MCF 10A (cell line): ENCODE measurements at regions of chr7 and their contacts with region 1.

Region 1: GRCh38 chr7:148856891-148857290 is 27.2 kb downstream of the EZH2 start:
- DNase-seq: no peak
- H3K4me3 Mint-ChIP-seq: no peak overlapping the region
- H3K27ac Mint-ChIP-seq: no peak overlapping the region
- H3K4me1 Mint-ChIP-seq: peaks cover 13% of the 10 kb centered on the region
- H3K27me3 Mint-ChIP-seq: no peaks in the 10 kb centered on the region
- CTCF ChIP-seq: no peak

Region 2: GRCh38 chr7:148871030-148871429 is 14.1 kb after region 1 on chr7:
- CTCF ChIA-PET with region 1: interaction called, 9 read pairs
- POLR2A ChIA-PET with region 1: interaction called, 13 read pairs
- intact Hi-C with region 1: loop called (anchors 2 kb)
- DNase-seq: no peak
- H3K4me3 Mint-ChIP-seq: no peak overlapping the region
- H3K27ac Mint-ChIP-seq: no peak overlapping the region
- H3K4me1 Mint-ChIP-seq: no peaks in the 10 kb centered on the region
- H3K27me3 Mint-ChIP-seq: no peaks in the 10 kb centered on the region
- CTCF ChIP-seq: no peak

Region 3: DNA sequence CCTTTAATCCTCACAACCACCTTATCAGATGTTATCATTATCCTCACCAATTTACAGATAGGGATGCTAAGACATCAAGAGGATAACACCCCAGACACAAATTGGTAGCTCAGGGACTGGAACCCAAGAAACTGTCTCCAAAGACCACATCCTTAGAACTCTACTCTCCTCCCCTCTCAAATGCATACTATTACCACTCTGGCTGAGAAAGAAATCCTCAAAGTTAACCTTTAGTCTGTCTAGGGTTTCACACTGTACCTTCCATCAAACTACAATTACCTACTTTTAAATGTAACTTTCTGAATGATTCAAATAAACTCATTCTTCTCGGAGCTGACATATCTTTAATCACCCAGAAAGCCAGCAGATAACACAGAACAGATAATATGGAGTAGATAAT is 20.6 kb after region 1 on chr7:
- CTCF ChIA-PET with region 1: interaction called, 9 read pairs
- POLR2A ChIA-PET with region 1: interaction called, 13 read pairs
- intact Hi-C with region 1: loop called (anchors 2 kb)
- DNase-seq: no peak
- H3K4me3 Mint-ChIP-seq: no peak overlapping the region
- H3K27ac Mint-ChIP-seq: no peak overlapping the region
- H3K4me1 Mint-ChIP-seq: peaks cover 22% of the 10 kb centered on the region
- H3K27me3 Mint-ChIP-seq: no peaks in the 10 kb centered on the region
- CTCF ChIP-seq: no peak